ENCODE measurements at regions of chr3 and their contacts with region 1.

Region 1: GRCh38 chr3:169964176-169964575 is 2.4 kb upstream of the SEC62 start:
- DNase-seq: no peak
- ATAC-seq: no peak
- H3K4me3 ChIP-seq: no peak overlapping the region
- H3K27ac ChIP-seq: no peak overlapping the region
- H3K4me1 ChIP-seq: peaks cover 0 to 9% (median 2%) of the 10 kb centered on the region in 4 donors
- H3K27me3 ChIP-seq: no peaks in the 10 kb centered on the region
- CTCF ChIP-seq: no peak
- POLR2A ChIP-seq: no peak

Region 2: GRCh38 chr3:169754721-169755120 is 209.5 kb before region 1 on chr3:
- intact Hi-C with region 1: loop called in 1 of 2 experiments (anchors 5 kb)
- DNase-seq: no peak
- ATAC-seq: peak in 1 of 4 donors; percentile 20
- H3K4me3 ChIP-seq: no peak overlapping the region
- H3K27ac ChIP-seq: no peak overlapping the region
- H3K4me1 ChIP-seq: no peaks in the 10 kb centered on the region
- H3K27me3 ChIP-seq: no peaks in the 10 kb centered on the region
- CTCF ChIP-seq: no peak
- POLR2A ChIP-seq: no peak